ENCODE measurements at regions of chr2 and their contacts with region 1.

Region 1: DNA sequence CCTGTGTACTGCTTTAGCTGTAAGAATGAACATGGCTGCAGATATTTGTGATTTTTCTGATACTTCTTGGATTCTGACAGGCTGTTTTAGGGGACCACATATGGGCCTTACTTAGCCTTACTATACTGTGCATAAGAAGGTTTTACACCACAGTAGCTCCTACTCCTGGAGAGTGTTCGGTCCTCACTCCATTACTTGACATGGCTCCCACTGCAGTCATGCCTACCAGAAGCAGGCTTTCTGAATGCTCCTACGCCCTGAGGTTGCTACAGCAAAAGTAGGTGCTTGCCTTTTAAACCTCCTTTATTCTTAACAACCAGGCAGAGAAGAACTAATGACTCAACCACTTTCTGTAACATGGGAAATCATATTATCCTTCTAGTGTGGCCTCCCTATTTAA is 125.2 kb upstream of the MAP2 start:
- DNase-seq: no peak
- ATAC-seq: peak; percentile 78
- H3K4me3 Mint-ChIP-seq: peak overlapping the region; percentile 99
- H3K27ac Mint-ChIP-seq: peak overlapping the region; percentile 98
- H3K4me1 Mint-ChIP-seq: peaks cover 61% of the 10 kb centered on the region
- H3K27me3 Mint-ChIP-seq: peaks cover 2% of the 10 kb centered on the region; the same call in 1 of the 2 replicates
- CTCF ChIP-seq: no peak

Region 2: DNA sequence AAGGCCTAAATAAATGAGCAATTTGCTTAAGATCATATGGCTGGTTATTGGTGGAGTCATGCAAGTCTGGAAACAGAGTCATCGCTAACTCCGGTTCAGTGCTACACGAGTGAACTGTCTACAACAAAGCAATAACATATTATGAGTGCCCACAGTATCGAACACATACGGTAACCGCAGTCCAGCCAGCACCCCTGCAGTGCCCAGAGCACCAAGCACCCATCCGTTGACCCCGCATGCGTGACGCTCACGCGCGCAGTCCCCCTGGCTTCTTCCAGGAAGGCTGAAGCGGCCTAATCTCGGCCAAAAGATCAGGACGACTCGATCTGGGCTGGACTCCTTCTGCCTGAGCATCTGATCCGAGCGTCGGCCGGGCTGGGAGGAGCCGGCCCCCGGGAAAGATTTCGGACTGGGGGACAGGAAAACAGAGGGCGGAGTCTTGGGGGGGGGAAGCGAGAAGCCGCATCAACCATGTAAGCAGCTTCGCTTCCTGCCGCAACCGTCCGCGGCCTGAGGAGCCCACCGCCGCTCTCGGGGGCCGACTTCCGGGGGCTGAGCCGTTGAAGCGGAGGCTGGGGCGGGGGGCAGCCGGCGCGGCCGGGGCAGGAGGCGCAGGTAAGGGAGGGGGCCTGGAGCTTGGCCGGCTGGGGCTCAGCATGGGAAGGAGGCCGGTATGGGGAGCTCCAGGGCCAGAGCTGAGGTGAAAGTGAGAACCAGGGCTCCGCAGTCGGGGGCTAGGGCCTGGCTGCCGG is 1032.6 kb before region 1 on chr2 and contains the start of gene PIKFYVE:
- CTCF ChIA-PET with region 1: no interaction called
- POLR2A ChIA-PET with region 1: interaction called, 10 read pairs
- DNase-seq: peak; percentile 94
- ATAC-seq: peak; percentile 90
- H3K4me3 Mint-ChIP-seq: peak within 1 kb of the TSS; percentile 93
- H3K27ac Mint-ChIP-seq: peak within 1 kb of the TSS; percentile 97
- H3K4me1 Mint-ChIP-seq: peaks cover 28% of the 10 kb centered on the region
- H3K27me3 Mint-ChIP-seq: no peaks in the 10 kb centered on the region
- CTCF ChIP-seq: no peak
- total RNA-seq, gene PIKFYVE: 28.9 to 36.1 TPM (median 33.6 TPM) in 3 replicates

Region 3: DNA sequence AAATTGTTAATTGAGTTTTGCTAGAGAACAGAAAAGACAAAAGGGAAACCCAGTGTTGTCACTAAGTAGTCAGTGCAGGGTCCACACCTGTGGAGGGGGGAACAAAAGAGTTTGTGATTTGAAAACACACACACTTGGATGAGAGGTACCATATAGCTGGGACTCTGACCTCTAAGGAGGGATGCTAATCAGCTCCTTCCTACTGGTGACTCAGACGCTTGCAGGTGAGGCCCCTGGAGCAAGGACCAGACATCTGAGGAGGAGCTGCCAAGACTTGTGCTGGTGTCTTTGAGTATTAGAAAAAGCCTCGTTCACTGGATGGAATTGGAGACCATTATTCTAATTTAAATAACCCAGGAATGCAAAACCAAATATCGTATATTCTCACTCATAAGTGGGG is 21.2 kb before region 1 on chr2:
- CTCF ChIA-PET with region 1: no interaction called
- POLR2A ChIA-PET with region 1: no interaction called
- DNase-seq: no peak
- ATAC-seq: peak; percentile 73
- H3K4me3 Mint-ChIP-seq: no peak overlapping the region
- H3K27ac Mint-ChIP-seq: no peak overlapping the region
- H3K4me1 Mint-ChIP-seq: peaks cover 28% of the 10 kb centered on the region
- H3K27me3 Mint-ChIP-seq: no peaks in the 10 kb centered on the region; the same call in 1 of the 2 replicates
- CTCF ChIP-seq: no peak

Region 4: DNA sequence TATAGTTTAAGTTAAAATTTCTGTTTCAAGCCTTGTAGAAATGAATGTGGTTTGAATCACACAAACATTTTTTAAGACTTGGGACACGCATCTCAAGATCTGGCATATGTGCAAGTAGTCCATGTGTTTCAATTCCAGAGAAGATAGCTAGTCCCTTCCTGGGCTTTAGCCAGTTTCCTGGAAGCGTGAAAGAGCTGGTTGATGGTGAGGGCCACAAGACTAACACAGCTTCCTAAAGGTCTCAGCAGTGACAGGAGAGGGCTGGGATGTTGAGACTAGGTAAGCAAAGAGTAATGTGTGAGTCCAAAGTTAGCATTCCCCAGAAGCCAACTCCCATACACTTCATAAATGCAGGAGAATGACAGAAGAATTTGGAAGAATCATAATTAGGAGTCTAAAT is 13.3 kb after region 1 on chr2:
- CTCF ChIA-PET with region 1: no interaction called
- POLR2A ChIA-PET with region 1: no interaction called
- DNase-seq: no peak
- ATAC-seq: no peak
- H3K4me3 Mint-ChIP-seq: no peak overlapping the region
- H3K27ac Mint-ChIP-seq: no peak overlapping the region
- H3K4me1 Mint-ChIP-seq: peaks cover 43% of the 10 kb centered on the region
- H3K27me3 Mint-ChIP-seq: peaks cover 3% of the 10 kb centered on the region; the same call in 1 of the 2 replicates
- CTCF ChIP-seq: no peak